Endothelial cell of umbilical vein (primary cell): ENCODE measurements at regions of chr2 and their contacts with region 1.

Region 1: GRCh38 chr2:197434541-197435513 is at the start of gene SF3B1:
- DNase-seq: peak; percentile 99
- H3K4me3 ChIP-seq: peak within 1 kb of the TSS; percentile 67 to 100 (median 99)
- H3K27ac ChIP-seq: peak within 1 kb of the TSS; percentile 96
- H3K4me1 ChIP-seq: peaks cover 19% of the 10 kb centered on the region
- H3K27me3 ChIP-seq: no peaks in the 10 kb centered on the region
- CTCF ChIP-seq: peak in 1 of 2 donors; percentile 3
- POLR2A ChIP-seq: peak; percentile 95
- total RNA-seq, gene SF3B1: 222 and 234 TPM in 2 replicates

Region 2: GRCh38 chr2:197229509-197230443 is 205.1 kb before region 1 on chr2:
- CTCF ChIA-PET with region 1: no interaction called
- POLR2A ChIA-PET with region 1: no interaction called
- dilution Hi-C with region 1: no loop called
- intact Hi-C with region 1: no loop called
- DNase-seq: no peak
- H3K4me3 ChIP-seq: no peak overlapping the region
- H3K27ac ChIP-seq: no peak overlapping the region
- H3K4me1 ChIP-seq: no peaks in the 10 kb centered on the region
- H3K27me3 ChIP-seq: no peaks in the 10 kb centered on the region
- CTCF ChIP-seq: no peak
- POLR2A ChIP-seq: no peak

Region 3: DNA sequence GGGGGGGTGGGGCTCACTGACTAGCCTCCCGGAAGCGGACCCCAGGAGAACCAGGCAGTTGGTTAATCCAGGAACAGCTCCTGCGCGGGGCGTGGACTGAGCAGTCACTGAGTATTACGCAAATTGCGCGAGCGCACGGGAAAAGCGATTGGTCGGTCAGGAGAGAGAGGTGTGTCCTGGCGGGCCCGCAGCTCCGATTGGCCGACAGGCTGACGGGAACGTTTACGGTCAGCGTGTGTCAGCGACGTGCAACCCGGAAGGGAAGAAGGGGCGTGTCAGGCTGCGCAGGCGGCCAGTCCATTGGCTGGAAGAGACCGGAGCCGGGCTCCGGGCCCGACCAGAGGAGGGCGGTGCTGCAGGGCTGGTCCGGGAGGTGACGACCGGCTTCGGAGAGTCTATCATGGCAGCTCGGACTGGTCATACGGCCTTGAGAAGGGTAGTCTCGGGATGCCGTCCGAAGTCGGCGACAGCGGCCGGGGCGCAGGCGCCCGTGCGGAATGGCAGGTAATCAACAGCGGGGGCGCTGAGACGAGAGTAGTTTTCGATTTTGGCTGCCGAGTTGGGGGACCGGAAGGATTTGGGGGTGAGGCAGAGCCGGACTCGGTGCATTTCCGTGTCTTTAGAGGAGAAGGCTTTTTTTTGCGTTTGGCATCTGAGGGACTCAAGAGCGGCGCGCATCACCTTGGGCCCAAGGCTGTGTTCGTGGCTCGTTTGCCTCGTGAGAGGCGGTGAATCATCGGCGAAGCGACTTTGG is 18.5 kb after region 1 on chr2 and contains the start of gene COQ10B:
- CTCF ChIA-PET with region 1: interaction called, 15 read pairs
- POLR2A ChIA-PET with region 1: interaction called, 16 read pairs
- dilution Hi-C with region 1: no loop called
- intact Hi-C with region 1: loop called (anchors 1 kb)
- DNase-seq: peak; percentile 100
- H3K4me3 ChIP-seq: peak within 1 kb of the TSS; percentile 61 to 95 (median 75)
- H3K27ac ChIP-seq: peak within 1 kb of the TSS; percentile 98
- H3K4me1 ChIP-seq: peaks cover 14% of the 10 kb centered on the region
- H3K27me3 ChIP-seq: no peaks in the 10 kb centered on the region
- CTCF ChIP-seq: peak in 1 of 2 donors; percentile 30
- POLR2A ChIP-seq: peak; percentile 94
- total RNA-seq, gene COQ10B: 15.1 and 19.5 TPM in 2 replicates